ENCODE measurements at regions of chr5 and their contacts with region 1.

Region 1: GRCh38 chr5:139765409-139766217 is 30.0 kb upstream of the PSD2 start:
- DNase-seq: peak; percentile 49
- H3K4me3 ChIP-seq: peak overlapping the region; percentile 27 to 41
- H3K27ac ChIP-seq: no peak overlapping the region
- H3K4me1 ChIP-seq: no peaks in the 10 kb centered on the region
- H3K27me3 ChIP-seq: peaks cover 6% of the 10 kb centered on the region
- CTCF ChIP-seq: peak; percentile 94 to 100 (median 96)
- POLR2A ChIP-seq: no peak

Region 2: GRCh38 chr5:139422307-139422893 is 343.2 kb before region 1 on chr5:
- intact Hi-C with region 1: loop called (anchors 2 kb)
- DNase-seq: peak; percentile 33
- H3K4me3 ChIP-seq: no peak overlapping the region
- H3K27ac ChIP-seq: no peak overlapping the region
- H3K4me1 ChIP-seq: no peaks in the 10 kb centered on the region
- H3K27me3 ChIP-seq: no peaks in the 10 kb centered on the region
- CTCF ChIP-seq: peak; percentile 32 to 85 (median 62)
- POLR2A ChIP-seq: no peak

Region 3: GRCh38 chr5:139633295-139634027 is 132.2 kb before region 1 on chr5:
- intact Hi-C with region 1: loop called (anchors 1 kb)
- DNase-seq: peak; percentile 54
- H3K4me3 ChIP-seq: no peak overlapping the region
- H3K27ac ChIP-seq: no peak overlapping the region
- H3K4me1 ChIP-seq: peaks cover 11% of the 10 kb centered on the region
- H3K27me3 ChIP-seq: no peaks in the 10 kb centered on the region
- CTCF ChIP-seq: peak; percentile 97 to 99 (median 98)
- POLR2A ChIP-seq: no peak

Region 4: GRCh38 chr5:139711067-139711905 is 54.3 kb before region 1 on chr5:
- intact Hi-C with region 1: loop called (anchors 5 kb)
- DNase-seq: no peak
- H3K4me3 ChIP-seq: peak overlapping the region; percentile 31 to 38
- H3K27ac ChIP-seq: no peak overlapping the region
- H3K4me1 ChIP-seq: no peaks in the 10 kb centered on the region
- H3K27me3 ChIP-seq: no peaks in the 10 kb centered on the region
- CTCF ChIP-seq: no peak
- POLR2A ChIP-seq: no peak

Measured in prostate gland (tissue), 2 donors.